ENCODE measurements at regions of chr2 and their contacts with region 1.

Region 1: DNA sequence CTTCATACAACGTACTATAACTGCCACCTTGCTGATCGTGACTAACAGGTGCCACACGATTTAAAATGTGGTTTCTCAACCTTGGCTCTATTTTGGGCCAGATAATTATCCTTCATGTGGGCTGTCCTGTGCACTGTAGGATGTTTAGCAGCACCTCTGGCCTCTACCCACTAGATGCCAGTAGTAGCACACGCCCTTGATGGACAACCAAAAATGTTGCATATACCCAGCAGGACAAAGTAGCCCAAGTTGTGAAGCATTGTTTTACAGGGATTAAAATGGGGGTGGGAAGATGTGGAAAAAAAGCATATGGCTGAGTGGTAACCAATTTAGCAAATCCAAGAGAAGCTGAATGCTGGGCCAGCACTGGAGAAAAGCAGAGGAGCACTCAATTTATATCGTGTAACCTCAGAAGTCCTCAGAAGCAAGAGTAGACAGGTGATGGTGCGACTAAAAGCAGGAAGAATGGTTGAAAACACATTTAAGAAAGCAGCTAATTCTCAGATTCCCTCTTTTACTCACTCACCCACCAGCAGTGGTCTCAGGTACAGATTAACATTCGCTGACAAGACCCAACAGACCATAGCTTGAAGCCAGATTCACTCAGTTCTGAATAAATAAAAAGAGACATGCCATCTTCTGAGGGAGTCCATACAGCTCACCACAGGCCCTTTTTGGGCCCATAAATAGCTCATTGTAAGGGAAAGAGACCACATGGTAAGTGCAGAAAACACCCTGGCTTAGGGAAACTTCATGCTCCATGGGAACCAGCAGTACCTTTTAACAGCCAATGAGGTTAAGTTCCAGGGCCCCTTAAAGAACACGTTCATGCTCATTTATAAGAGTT is 50.6 kb downstream of the RAPH1 start:
- DNase-seq: no peak
- ATAC-seq: peak; percentile 96

Region 2: GRCh38 chr2:203650860-203651613 is 166.5 kb after region 1 on chr2:
- intact Hi-C with region 1: loop called (anchors 5 kb)
- DNase-seq: no peak
- ATAC-seq: peak; percentile 79

Region 3: DNA sequence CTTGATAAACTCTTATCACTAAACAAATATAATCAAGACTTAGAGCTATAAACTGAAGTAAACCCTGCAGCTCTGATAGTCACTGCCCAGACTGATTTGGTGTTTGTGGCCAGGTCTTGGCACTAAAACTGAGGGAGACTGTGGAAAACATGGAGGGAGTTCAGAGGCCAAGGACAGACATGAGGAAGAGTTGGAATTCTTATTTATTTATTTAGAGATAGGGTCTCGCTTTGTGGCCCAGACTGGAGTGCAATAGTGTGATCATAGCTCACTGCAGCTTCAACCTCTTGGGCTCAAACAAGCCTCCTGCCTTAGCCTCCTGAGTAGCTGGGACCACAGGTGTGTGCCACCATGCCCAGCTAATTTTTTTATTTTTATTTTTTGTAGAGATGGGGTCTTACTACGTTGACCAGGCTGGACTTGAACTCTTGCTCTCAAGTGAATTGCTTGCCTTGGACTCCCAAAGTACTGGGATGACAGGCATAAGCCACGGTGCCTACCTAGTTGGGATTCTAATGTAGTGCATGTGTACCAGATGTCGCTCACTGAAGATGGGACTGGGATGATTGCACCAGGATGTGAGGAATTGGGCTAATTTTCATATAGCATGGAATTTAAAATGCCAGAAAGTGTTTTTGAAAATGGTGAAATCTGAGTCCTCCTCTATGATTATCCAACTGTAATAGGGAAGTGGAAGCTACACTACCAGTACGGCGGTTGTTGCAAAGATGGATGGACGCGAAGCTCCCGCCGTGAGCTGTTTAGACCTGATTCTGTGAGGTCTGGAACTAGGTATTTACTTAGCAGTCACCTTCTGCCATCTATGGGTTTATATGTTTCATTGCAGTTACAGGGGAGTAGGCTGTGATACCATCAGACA is 330.4 kb after region 1 on chr2:
- intact Hi-C with region 1: loop called (anchors 2 kb)
- DNase-seq: peak; percentile 69
- ATAC-seq: peak; percentile 86

Region 4: DNA sequence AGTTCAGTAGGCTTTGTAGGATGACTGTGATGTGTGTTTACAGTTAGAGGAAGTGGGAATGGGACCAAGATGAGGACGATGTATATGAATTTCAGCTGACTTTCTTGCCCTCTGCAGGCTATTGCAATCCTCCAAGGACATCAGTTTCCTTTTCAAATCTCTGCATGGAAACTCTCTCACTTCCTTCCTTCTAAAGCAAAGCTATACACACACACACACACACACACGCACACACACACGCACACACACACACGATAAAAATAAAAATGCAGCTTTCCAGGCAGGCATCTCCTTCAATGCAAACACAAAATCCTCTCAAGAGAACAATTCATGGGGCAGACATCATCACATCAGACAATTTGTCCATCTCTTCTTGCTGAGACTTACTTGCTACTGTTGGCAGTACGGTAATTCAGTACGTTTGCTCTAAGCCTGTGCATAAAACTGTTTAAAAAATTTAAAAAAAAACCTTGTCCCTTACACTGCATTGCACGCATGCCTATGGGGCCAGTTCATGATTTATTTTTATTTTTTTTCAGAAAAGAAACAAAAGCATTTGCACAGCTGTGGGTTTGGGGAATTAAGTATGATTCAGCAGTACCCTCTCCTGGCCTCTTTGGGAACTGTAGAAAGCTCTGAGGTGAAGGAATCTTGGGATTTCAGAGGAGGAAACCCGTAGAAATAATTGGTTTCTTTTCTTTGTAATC is 424.9 kb after region 1 on chr2:
- intact Hi-C with region 1: loop called (anchors 10 kb)
- DNase-seq: no peak
- ATAC-seq: peak; percentile 91